HEK293 (cell line): ENCODE measurements at regions of chr15 and their contacts with region 1.

Region 1: GRCh38 chr15:49421991-49422390 is 1.1 kb upstream of the FGF7 start:
- H3K4me3 ChIP-seq: no peak overlapping the region
- H3K27ac ChIP-seq: no peak overlapping the region
- H3K4me1 ChIP-seq: no peaks in the 10 kb centered on the region
- CTCF ChIP-seq: no peak

Region 2: GRCh38 chr15:48842501-48842900 is 579.5 kb before region 1 on chr15:
- CTCF ChIA-PET with region 1: no interaction called
- POLR2A ChIA-PET with region 1: no interaction called
- H3K4me3 ChIP-seq: no peak overlapping the region
- H3K27ac ChIP-seq: no peak overlapping the region
- H3K4me1 ChIP-seq: no peaks in the 10 kb centered on the region
- CTCF ChIP-seq: no peak

Region 3: DNA sequence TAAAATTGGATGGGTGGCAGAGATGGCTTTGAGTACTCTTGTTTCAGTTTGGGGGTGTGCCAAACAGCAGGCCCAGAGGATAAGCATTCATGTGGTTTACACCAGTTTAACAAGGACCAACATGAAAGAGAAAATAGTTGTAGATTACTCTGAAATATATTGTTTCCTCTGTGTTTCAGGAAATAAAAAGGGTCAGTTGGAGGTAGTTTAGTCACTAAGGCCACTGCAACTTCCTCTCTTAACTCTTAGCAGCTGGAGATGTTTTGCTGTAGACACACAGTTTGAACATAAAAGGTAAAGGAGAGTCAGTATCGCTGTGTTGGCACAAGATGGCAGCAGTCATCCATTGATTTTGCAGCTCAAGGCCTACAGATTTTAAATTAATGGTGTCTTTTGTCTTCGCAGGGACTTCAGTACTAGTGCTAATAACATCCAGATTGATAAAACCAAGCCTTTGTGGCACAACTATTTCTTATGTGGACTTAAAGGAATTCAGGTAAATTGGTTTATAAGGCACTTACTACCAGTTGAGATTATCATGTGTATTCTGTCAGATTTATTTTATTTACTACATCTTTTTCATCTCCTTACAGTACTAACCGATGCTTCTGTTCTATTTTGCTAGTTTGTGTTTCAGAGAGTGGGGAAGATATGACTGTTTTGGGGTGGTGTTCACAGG is 186.4 kb before region 1 on chr15:
- CTCF ChIA-PET with region 1: interaction called, 33 read pairs
- POLR2A ChIA-PET with region 1: no interaction called
- H3K4me3 ChIP-seq: no peak overlapping the region
- H3K27ac ChIP-seq: no peak overlapping the region
- H3K4me1 ChIP-seq: peaks cover 3% of the 10 kb centered on the region; the same call in 1 of the 2 replicates
- CTCF ChIP-seq: peak; percentile 38; the same call in 1 of the 2 replicates

Region 4: GRCh38 chr15:49343546-49343945 is 78.4 kb before region 1 on chr15:
- CTCF ChIA-PET with region 1: no interaction called
- POLR2A ChIA-PET with region 1: no interaction called
- H3K4me3 ChIP-seq: no peak overlapping the region
- H3K27ac ChIP-seq: no peak overlapping the region
- H3K4me1 ChIP-seq: no peaks in the 10 kb centered on the region
- CTCF ChIP-seq: no peak

Region 5: DNA sequence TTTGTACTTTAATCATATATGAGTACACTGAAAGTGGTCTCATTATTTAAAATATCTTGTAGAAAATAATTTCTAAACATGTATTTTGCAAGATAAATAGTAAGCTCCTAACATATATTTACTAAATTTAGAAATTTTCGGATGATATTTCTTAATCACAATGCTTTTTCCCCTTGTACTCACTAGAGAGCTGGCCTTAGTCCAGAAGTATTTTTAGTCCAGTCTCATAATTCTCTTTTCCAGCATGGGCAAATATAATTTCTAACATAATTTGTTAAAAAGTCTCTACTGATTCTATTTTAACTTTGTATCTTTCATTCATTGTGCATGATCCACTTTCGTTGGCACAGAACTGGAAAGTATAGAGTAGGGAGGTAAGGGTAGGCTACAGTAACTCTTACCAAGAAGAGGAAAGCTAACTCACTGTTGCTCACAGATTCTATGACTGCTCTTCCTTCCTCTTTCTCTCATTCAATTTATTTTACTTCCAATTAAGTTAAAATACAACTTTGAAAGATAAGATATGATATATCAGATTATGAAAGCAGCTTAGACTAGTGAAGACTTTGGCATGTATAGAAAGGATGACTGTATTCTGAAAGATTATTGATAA is 40.3 kb after region 1 on chr15:
- CTCF ChIA-PET with region 1: no interaction called
- POLR2A ChIA-PET with region 1: no interaction called
- H3K4me3 ChIP-seq: no peak overlapping the region
- H3K27ac ChIP-seq: no peak overlapping the region
- H3K4me1 ChIP-seq: no peaks in the 10 kb centered on the region
- CTCF ChIP-seq: no peak

Region 6: GRCh38 chr15:49538520-49538919 is 116.5 kb after region 1 on chr15:
- CTCF ChIA-PET with region 1: no interaction called
- POLR2A ChIA-PET with region 1: no interaction called
- H3K4me3 ChIP-seq: no peak overlapping the region
- H3K27ac ChIP-seq: no peak overlapping the region
- H3K4me1 ChIP-seq: no peaks in the 10 kb centered on the region
- CTCF ChIP-seq: no peak